Activated B cell treated with CpG ODN at 0.5 μM for 24 hours (primary cell): ENCODE measurements at regions of chr4 and their contacts with region 1.

Region 1: GRCh38 chr4:114180481-114180880 is 201.0 kb upstream of the ARSJ start:
- DNase-seq: no peak
- ATAC-seq: no peak
- H3K4me3 Mint-ChIP-seq: no peak overlapping the region
- H3K27ac Mint-ChIP-seq: no peak overlapping the region
- H3K4me1 Mint-ChIP-seq: no peaks in the 10 kb centered on the region
- H3K27me3 Mint-ChIP-seq: no peaks in the 10 kb centered on the region
- CTCF ChIP-seq: no peak

Region 2: GRCh38 chr4:113952452-113953029 is 227.9 kb before region 1 on chr4:
- CTCF ChIA-PET with region 1: no interaction called
- POLR2A ChIA-PET with region 1: no interaction called
- intact Hi-C with region 1: loop called (anchors 2 kb)
- DNase-seq: no peak
- ATAC-seq: peak; percentile 71
- H3K4me3 Mint-ChIP-seq: no peak overlapping the region
- H3K27ac Mint-ChIP-seq: no peak overlapping the region
- H3K4me1 Mint-ChIP-seq: peaks cover 2% of the 10 kb centered on the region
- H3K27me3 Mint-ChIP-seq: peaks cover 16% of the 10 kb centered on the region
- CTCF ChIP-seq: peak; percentile 55